Naive thymus-derived CD8-positive, alpha-beta T cell (primary cell): ENCODE measurements at regions of chr12 and their contacts with region 1.

Region 1: GRCh38 chr12:112828541-112828940 is 37.0 kb downstream of the RPH3A start:
- DNase-seq: no peak
- ATAC-seq: no peak
- H3K4me3 Mint-ChIP-seq: no peak overlapping the region
- H3K27ac Mint-ChIP-seq: no peak overlapping the region
- H3K4me1 Mint-ChIP-seq: peaks cover 0 to 4% (median 0%) of the 10 kb centered on the region in 4 donors
- H3K27me3 Mint-ChIP-seq: peaks cover 8 to 17% (median 11%) of the 10 kb centered on the region in 5 donors

Region 2: DNA sequence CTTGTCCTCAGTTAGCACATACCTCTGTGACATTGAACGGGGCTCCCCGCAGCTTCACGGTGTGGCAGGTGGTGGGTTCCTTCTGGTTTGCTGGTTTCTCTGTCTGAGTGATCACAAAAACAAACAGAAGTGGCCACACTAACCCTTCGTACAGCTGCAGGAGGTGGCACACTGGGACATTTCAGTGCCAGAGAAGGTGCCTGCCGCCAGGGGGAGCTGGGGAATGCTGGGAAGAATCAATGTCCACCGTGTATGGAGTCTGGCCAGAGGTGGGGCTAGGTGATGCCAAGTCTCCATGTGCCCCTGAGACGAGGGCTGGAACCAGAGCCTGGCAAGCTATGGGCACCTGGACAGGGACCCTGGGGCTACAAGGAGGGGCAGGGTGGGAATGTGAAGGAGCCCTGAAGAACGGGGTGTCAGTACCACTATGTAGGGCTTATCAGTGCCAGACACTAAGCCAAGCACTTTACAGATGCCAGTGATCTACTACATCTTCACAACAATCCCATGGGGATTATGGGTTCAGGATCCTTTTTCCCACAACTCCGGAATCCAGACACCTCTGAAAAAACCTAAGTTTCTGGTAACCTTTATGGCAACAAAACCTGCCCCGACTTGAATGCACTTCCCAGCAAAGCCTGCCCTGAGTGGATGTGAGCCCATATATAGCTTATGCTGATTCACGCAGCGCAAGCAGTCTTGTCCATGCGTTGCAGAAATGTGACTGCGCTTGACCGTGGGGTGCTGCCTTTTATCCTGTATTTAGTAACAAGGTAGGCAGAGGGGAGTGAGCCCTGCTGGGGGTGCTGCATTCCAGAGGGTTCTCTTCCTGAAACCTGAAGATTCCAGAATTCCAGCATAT is 1126.8 kb after region 1 on chr12:
- POLR2A ChIA-PET with region 1: interaction called, 12 read pairs
- DNase-seq: no peak
- ATAC-seq: no peak
- H3K4me3 Mint-ChIP-seq: no peak overlapping the region
- H3K27ac Mint-ChIP-seq: no peak overlapping the region
- H3K4me1 Mint-ChIP-seq: peaks cover 0 to 4% (median under 1%) of the 10 kb centered on the region in 4 donors
- H3K27me3 Mint-ChIP-seq: no peaks in the 10 kb centered on the region